Mammary epithelial cell (primary cell): ENCODE measurements at regions of chr1 and their contacts with region 1.

Region 1: DNA sequence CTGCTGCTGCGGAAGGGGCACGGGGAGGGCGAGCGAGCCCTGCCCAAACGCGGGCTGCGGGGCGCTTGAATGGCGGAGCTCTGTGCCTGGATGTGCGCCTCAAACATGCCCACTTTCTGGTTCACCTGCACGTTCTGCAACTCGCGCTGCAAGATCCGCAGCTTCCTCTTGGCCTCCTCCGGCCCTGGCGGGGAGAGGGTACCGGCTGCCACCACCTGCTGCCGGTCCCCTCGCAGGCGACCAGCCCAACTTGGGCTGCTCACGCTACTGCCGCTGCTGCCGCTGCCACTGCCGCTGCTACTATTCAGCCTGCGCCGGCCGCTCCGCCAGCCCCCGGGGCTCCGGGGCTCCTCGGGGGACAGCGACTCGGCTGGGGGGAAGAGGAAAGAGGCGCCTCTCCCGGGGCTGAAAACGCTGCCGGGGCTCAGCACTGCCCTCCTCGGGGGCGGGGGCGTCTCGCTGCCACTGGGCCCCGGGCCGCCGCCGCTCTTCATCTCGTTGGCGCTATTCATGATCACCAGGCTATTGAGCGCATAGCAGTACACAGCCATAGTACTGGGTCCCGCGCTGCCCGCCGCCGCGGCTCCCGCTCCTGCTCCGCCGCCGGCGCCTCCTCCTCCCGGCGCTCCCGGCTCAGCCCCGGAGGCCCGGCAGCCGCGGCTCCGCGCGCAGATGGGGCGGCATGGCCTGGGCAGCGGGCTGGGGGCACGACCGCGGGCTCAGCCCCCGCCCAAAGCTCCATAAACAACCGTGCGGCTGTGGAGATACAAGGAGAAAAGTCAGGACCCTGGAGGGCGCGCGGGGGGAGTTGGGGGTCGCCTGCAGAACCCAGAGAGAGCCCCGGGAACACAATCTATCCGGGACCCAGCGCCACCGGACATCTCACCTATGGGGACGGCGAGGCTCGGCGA is 1.9 kb downstream of the ITPKB start:
- DNase-seq: peak; percentile 10
- H3K4me3 ChIP-seq: peak overlapping the region; percentile 67 to 89 (median 70)
- H3K27ac ChIP-seq: peak overlapping the region; percentile 53
- H3K4me1 ChIP-seq: peaks cover 22% of the 10 kb centered on the region
- H3K27me3 ChIP-seq: no peaks in the 10 kb centered on the region
- CTCF ChIP-seq: peak in 1 of 2 donors; percentile 13

Region 2: GRCh38 chr1:226634166-226634588 is 103.0 kb before region 1 on chr1:
- CTCF ChIA-PET with region 1: interaction called, 5 read pairs
- dilution Hi-C with region 1: no loop called
- in situ Hi-C with region 1: no loop called
- intact Hi-C with region 1: loop called (anchors 1 kb)
- DNase-seq: peak; percentile 32
- H3K4me3 ChIP-seq: no peak overlapping the region
- H3K27ac ChIP-seq: no peak overlapping the region
- H3K4me1 ChIP-seq: peaks cover 7% of the 10 kb centered on the region
- H3K27me3 ChIP-seq: no peaks in the 10 kb centered on the region
- CTCF ChIP-seq: peak; percentile 73 to 96

Region 3: GRCh38 chr1:226656601-226657277 is 80.4 kb before region 1 on chr1:
- CTCF ChIA-PET with region 1: no interaction called
- dilution Hi-C with region 1: no loop called
- in situ Hi-C with region 1: no loop called
- intact Hi-C with region 1: loop called (anchors 5 kb)
- DNase-seq: peak; percentile 90
- H3K4me3 ChIP-seq: no peak overlapping the region
- H3K27ac ChIP-seq: peak overlapping the region; percentile 73
- H3K4me1 ChIP-seq: peaks cover 38% of the 10 kb centered on the region
- H3K27me3 ChIP-seq: no peaks in the 10 kb centered on the region
- CTCF ChIP-seq: no peak

Region 4: GRCh38 chr1:226708342-226708780 is 28.8 kb before region 1 on chr1:
- CTCF ChIA-PET with region 1: no interaction called
- dilution Hi-C with region 1: no loop called
- in situ Hi-C with region 1: no loop called
- intact Hi-C with region 1: loop called (anchors 2 kb)
- DNase-seq: peak; percentile 91
- H3K4me3 ChIP-seq: no peak overlapping the region
- H3K27ac ChIP-seq: no peak overlapping the region
- H3K4me1 ChIP-seq: peaks cover 33% of the 10 kb centered on the region
- H3K27me3 ChIP-seq: no peaks in the 10 kb centered on the region
- CTCF ChIP-seq: no peak

Region 5: DNA sequence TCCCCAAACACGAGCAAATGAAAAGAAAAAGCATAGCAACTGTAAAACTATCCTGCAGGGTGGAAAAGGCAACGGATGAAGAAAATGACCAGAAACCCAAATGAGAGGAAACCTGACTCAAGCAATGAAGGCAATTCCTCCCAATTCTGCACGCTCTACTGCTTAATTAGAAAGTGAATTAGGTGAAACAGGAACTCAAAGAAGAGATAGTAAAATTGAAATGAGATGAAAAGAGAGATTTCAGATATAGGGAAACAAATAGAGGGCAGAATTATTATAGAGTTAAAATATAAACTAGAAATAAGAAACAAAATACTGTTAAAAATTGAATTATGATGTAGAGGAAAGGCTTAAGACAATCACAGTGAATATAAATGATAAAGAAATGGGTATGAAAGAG is 29.4 kb after region 1 on chr1:
- CTCF ChIA-PET with region 1: no interaction called
- dilution Hi-C with region 1: no loop called
- in situ Hi-C with region 1: no loop called
- intact Hi-C with region 1: no loop called
- DNase-seq: no peak
- H3K4me3 ChIP-seq: no peak overlapping the region
- H3K27ac ChIP-seq: no peak overlapping the region
- H3K4me1 ChIP-seq: no peaks in the 10 kb centered on the region
- H3K27me3 ChIP-seq: no peaks in the 10 kb centered on the region
- CTCF ChIP-seq: no peak

Region 6: GRCh38 chr1:226778657-226779058 is 41.5 kb after region 1 on chr1:
- CTCF ChIA-PET with region 1: no interaction called
- dilution Hi-C with region 1: no loop called
- in situ Hi-C with region 1: no loop called
- intact Hi-C with region 1: loop called (anchors 1 kb)
- DNase-seq: peak; percentile 94
- H3K4me3 ChIP-seq: no peak overlapping the region
- H3K27ac ChIP-seq: no peak overlapping the region
- H3K4me1 ChIP-seq: peaks cover 9% of the 10 kb centered on the region
- H3K27me3 ChIP-seq: peaks cover 3% of the 10 kb centered on the region
- CTCF ChIP-seq: no peak

Region 7: GRCh38 chr1:226814751-226815496 is 77.8 kb after region 1 on chr1:
- CTCF ChIA-PET with region 1: no interaction called
- dilution Hi-C with region 1: no loop called
- in situ Hi-C with region 1: no loop called
- intact Hi-C with region 1: loop called (anchors 1 kb)
- DNase-seq: peak; percentile 89
- H3K4me3 ChIP-seq: no peak overlapping the region
- H3K27ac ChIP-seq: peak overlapping the region; percentile 68
- H3K4me1 ChIP-seq: peaks cover 32% of the 10 kb centered on the region
- H3K27me3 ChIP-seq: no peaks in the 10 kb centered on the region
- CTCF ChIP-seq: no peak